WTC11 (cell line): ENCODE measurements at regions of chr2 and their contacts with region 1.

Region 1: DNA sequence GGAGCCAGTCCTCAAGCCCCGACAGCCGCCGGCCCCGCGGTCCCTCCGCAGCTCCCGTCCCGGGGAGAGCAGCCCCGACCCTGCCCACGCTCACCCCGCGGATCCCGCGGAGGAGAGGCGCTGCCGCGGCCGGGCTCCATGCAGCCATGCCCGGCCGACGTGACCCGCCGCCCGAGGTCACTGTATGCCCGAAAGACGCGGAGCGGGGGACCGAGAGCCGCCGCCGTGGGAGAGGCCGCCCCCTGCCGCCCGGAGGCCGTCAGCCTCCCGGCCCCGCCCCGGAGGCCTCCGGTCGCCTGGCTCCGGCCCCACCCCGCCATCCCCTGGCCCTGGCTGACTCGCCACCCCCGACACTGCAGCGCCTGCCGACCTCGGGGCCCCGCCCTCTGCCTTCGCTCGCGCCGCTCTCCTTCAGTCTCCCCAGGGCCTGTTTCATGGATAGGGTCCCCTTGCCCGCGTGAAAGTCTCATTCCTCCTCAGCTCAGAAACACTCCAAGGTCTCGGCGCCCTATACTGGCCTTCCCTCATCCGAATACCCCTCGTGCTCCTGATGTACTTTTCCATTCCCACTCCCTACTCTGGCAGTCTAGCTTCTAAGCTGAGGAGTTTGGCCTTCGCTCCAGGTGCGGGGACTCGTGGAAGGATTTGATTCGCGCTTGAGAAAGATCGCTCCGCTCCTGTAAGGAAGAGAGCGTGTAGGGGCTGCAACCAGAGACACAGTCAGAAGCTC is at the start of gene BOLA3:
- DNase-seq: peak; percentile 92
- ATAC-seq: peak; percentile 93
- H3K4me3 Mint-ChIP-seq: no peak within 1 kb of the TSS
- H3K27ac Mint-ChIP-seq: no peak within 1 kb of the TSS
- H3K4me1 Mint-ChIP-seq: peaks cover 9% of the 10 kb centered on the region; the same call in 1 of the 2 replicates
- H3K27me3 Mint-ChIP-seq: no peaks in the 10 kb centered on the region
- CTCF ChIP-seq: peak; percentile 41; the same call in 1 of the 2 replicates
- total RNA-seq, gene BOLA3: 58.2 to 66.1 TPM (median 65.8 TPM) in 3 replicates

Region 2: DNA sequence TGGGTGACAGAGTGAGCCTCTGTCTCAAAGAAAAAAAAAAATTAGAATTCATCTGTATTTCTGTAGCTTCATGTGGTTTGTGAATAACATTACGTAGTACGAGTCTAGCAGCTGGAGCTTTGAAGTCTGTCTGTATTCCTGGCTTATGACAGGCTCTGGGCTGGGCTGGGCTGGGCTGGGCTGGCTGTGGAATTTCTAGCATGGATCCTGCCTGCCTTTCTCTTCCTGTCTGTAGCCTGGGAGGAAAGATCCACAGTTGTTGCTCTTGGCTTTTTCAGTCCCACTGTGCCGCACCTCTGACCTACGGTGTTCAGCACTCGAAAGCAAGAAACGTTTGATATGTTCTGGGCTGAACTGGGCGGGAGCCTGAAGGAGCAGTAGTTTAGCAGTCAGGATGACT is 55.6 kb before region 1 on chr2:
- CTCF ChIA-PET with region 1: no interaction called
- POLR2A ChIA-PET with region 1: no interaction called
- DNase-seq: no peak
- ATAC-seq: no peak
- H3K4me3 Mint-ChIP-seq: no peak overlapping the region
- H3K27ac Mint-ChIP-seq: no peak overlapping the region
- H3K4me1 Mint-ChIP-seq: peaks cover 7% of the 10 kb centered on the region
- H3K27me3 Mint-ChIP-seq: no peaks in the 10 kb centered on the region
- CTCF ChIP-seq: no peak

Region 3: DNA sequence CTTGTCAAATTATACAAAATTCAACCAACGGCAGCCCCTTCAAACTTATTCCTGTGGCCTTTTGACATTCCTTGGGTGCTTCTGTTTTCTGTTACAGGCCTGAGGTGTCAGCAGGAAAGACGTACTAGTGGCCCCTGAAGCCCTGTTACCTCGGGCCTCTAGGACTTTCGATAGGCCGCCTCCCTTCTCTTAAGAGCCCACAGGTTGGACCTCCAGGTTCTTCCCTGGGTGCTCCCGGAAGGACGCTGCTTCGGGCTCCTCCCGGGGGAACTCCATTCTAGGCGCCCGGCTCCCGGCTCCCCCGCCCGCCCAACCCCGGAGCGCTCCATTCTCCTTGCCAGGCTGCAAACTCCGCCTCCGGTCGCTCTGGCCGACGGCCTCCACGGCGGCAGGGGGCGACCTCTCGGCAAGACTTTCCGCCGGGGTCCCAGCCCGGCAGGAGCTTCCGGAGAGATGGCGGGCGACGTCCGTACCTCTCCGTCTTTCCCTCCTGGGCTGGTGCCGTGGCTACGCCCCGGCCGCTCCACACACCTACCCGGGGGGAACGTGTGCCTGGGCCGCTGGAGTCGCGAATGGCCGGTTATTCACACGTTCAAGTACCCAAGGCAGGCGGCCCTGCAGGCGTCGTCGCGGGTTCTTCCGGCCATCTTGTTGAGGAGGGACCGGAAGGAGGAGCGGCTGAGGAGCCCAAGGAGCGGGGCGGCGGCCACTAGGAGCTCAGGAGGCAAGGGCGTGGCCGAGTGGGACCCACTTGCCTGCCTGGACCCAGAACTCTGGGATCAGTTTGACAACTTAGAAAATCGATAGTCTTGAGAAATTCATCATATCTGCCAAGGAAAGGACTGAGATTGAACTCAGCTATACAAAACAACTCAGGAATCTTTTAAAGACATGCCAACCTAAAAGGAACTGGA is 27.7 kb before region 1 on chr2:
- CTCF ChIA-PET with region 1: interaction called, 10 read pairs
- POLR2A ChIA-PET with region 1: no interaction called
- DNase-seq: peak; percentile 86
- ATAC-seq: peak; percentile 96
- H3K4me3 Mint-ChIP-seq: peak overlapping the region; percentile 61
- H3K27ac Mint-ChIP-seq: no peak overlapping the region
- H3K4me1 Mint-ChIP-seq: no peaks in the 10 kb centered on the region
- H3K27me3 Mint-ChIP-seq: peaks cover 76% of the 10 kb centered on the region
- CTCF ChIP-seq: no peak

Region 4: GRCh38 chr2:74178201-74179062 is 30.5 kb after region 1 on chr2 and contains the start of gene MOB1A:
- CTCF ChIA-PET with region 1: interaction called, 20 read pairs
- POLR2A ChIA-PET with region 1: interaction called, 12 read pairs
- DNase-seq: peak; percentile 99
- ATAC-seq: peak; percentile 98
- H3K4me3 Mint-ChIP-seq: peak within 1 kb of the TSS; percentile 86
- H3K27ac Mint-ChIP-seq: peak within 1 kb of the TSS; percentile 94
- H3K4me1 Mint-ChIP-seq: peaks cover 14% of the 10 kb centered on the region
- H3K27me3 Mint-ChIP-seq: no peaks in the 10 kb centered on the region
- CTCF ChIP-seq: no peak
- total RNA-seq, gene MOB1A: 84.9 to 92.6 TPM (median 88.2 TPM) in 3 replicates